Endothelial cell of umbilical vein (primary cell): ENCODE measurements at regions of chr3 and their contacts with region 1.

Region 1: DNA sequence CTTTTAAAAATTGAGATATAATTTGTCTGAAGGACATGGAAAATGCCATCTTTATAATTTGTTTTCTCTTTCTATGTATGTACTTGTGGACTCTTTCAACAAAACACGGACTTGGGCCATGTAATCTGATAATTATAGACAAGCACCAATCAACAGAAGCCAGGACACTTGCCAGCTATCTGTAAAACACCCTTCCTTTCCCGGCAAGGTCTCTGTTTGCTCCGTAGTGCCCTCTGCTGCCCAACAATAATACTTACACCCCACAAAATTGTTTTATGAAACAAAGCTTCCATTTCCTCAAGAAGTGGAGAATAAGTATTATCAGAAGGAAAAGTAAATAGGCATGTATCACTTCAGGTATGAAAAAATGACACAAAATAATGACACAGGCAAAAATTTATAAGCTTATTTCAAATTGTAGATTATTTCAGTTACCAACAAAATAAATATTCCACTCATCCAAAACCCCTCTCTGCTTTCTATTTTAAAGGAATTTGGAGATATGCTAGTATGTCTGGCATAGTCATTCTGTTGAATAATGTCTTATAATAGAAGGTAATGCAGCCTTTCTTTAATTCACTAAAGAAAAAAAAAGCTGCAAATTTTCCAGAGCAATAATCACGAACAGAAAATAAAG is 32.8 kb downstream of the MYH15 start:
- DNase-seq: peak; percentile 77
- H3K4me3 ChIP-seq: no peak overlapping the region
- H3K27ac ChIP-seq: no peak overlapping the region
- H3K4me1 ChIP-seq: peaks cover 2% of the 10 kb centered on the region
- H3K27me3 ChIP-seq: no peaks in the 10 kb centered on the region
- CTCF ChIP-seq: peak; percentile 55 to 57
- POLR2A ChIP-seq: no peak

Region 2: DNA sequence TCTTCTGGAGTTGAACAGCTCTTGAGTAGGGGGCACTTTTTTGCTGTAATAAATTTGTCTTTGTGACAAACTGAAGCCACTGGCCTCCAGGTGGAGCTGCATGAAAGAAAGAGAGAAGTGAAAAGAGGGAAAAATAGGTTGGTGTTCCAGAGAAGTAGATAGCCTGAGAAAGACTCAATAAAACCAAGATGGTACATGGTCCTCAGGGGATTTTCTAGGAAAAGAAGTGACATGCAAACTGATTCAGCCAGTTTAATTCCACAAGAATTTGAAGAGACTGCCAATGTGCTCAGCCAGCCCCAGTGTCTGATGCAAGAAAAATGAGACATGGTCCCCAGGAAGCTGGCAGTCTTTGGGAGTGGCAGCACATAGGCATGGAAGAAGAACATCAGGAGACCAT is 539.5 kb before region 1 on chr3:
- CTCF ChIA-PET with region 1: interaction called, 55 read pairs
- POLR2A ChIA-PET with region 1: no interaction called
- dilution Hi-C with region 1: no loop called
- intact Hi-C with region 1: loop called (anchors 1 kb)
- DNase-seq: peak; percentile 70
- H3K4me3 ChIP-seq: no peak overlapping the region
- H3K27ac ChIP-seq: no peak overlapping the region
- H3K4me1 ChIP-seq: peaks cover 13% of the 10 kb centered on the region
- H3K27me3 ChIP-seq: no peaks in the 10 kb centered on the region
- CTCF ChIP-seq: peak; percentile 28 to 55
- POLR2A ChIP-seq: no peak

Region 3: GRCh38 chr3:108153451-108153981 is 324.1 kb before region 1 on chr3:
- CTCF ChIA-PET with region 1: interaction called, 39 read pairs
- POLR2A ChIA-PET with region 1: no interaction called
- dilution Hi-C with region 1: no loop called
- intact Hi-C with region 1: loop called (anchors 1 kb)
- DNase-seq: peak; percentile 43
- H3K4me3 ChIP-seq: no peak overlapping the region
- H3K27ac ChIP-seq: no peak overlapping the region
- H3K4me1 ChIP-seq: peaks cover 10% of the 10 kb centered on the region
- H3K27me3 ChIP-seq: no peaks in the 10 kb centered on the region
- CTCF ChIP-seq: peak; percentile 18 to 30
- POLR2A ChIP-seq: no peak

Region 4: DNA sequence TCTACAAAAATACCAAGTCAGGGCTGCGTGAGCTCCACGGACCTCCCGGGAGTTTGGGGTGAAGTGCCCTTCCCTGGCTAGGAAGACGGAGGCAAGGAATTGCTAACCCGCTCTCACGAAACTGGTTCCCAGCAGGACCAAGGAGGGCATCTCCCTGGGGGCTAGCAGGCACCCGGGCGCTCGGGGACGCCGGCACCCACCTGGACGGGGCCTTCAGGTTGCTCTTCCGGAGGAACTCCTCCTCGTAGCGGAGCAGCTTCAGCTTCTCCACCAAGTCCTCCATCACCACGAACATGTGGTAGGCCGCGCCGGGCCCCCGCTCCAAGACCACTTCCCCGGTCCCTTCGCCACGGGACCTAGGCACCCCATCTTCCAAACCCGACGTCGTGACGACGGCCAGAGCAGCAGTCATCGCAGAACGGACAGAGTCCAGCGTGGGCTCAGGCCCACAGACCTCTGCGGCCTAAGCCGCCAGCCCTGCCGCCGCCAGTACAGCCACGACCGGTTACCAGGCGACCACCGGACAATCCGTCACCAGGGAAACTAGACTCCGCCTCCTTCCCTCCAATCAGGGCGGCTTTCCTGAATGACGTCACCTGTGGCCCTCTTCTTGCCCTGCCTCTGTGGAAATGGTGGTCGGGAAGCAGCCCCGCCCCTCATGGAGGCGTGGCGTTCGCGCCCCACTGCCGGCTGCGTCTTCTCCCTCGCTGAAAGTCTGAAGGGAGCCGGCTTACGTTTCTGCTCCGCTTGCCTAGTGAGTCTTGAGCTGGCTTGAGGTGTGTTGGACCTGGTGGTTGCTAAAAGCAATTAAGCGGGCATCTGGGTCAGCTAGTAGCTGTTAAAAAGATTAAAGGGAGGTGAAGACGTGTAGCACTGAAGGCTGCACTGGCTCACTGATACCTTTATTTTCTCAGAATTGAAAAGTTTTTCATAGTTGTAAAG is 255.4 kb before region 1 on chr3 and contains the start of gene IFT57:
- CTCF ChIA-PET with region 1: interaction called, 16 read pairs
- POLR2A ChIA-PET with region 1: no interaction called
- dilution Hi-C with region 1: no loop called
- intact Hi-C with region 1: loop called (anchors 2 kb)
- DNase-seq: peak; percentile 99
- H3K4me3 ChIP-seq: peak within 1 kb of the TSS; percentile 66 to 87 (median 82)
- H3K27ac ChIP-seq: peak within 1 kb of the TSS; percentile 68
- H3K4me1 ChIP-seq: peaks cover 21% of the 10 kb centered on the region
- H3K27me3 ChIP-seq: no peaks in the 10 kb centered on the region
- CTCF ChIP-seq: no peak
- POLR2A ChIP-seq: peak; percentile 36
- total RNA-seq, gene IFT57: 23.4 and 25.1 TPM in 2 replicates

Region 5: GRCh38 chr3:108406661-108407206 is 70.9 kb before region 1 on chr3:
- CTCF ChIA-PET with region 1: interaction called, 15 read pairs
- POLR2A ChIA-PET with region 1: no interaction called
- dilution Hi-C with region 1: no loop called
- intact Hi-C with region 1: no loop called
- DNase-seq: peak; percentile 60
- H3K4me3 ChIP-seq: no peak overlapping the region
- H3K27ac ChIP-seq: no peak overlapping the region
- H3K4me1 ChIP-seq: no peaks in the 10 kb centered on the region
- H3K27me3 ChIP-seq: no peaks in the 10 kb centered on the region
- CTCF ChIP-seq: peak; percentile 48 to 52
- POLR2A ChIP-seq: no peak

Region 6: DNA sequence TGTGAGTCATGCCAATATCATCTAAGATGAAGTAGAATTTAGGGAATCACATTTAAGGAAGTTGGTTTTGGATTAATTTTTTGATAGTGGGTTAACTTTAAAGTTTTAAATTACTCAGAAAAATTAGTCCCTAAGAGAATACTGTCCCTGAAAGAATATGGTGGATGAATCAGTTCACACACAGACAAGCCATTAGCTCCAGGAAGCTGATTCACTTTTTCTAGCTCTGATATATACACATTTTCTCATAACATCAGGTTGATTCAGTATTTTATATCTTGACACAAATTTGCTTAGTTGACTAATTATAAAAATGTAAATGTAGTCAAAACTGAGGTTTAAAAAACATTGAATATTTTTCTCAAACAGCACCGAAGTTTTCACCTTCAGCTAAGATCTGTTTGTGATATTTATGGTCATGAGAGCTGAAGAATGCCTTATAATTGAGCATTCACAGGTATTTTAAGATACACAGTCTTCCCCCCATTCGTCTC is 22.4 kb before region 1 on chr3:
- CTCF ChIA-PET with region 1: interaction called, 10 read pairs
- POLR2A ChIA-PET with region 1: no interaction called
- dilution Hi-C with region 1: no loop called
- intact Hi-C with region 1: no loop called
- DNase-seq: peak; percentile 36
- H3K4me3 ChIP-seq: no peak overlapping the region
- H3K27ac ChIP-seq: no peak overlapping the region
- H3K4me1 ChIP-seq: peaks cover 4% of the 10 kb centered on the region
- H3K27me3 ChIP-seq: no peaks in the 10 kb centered on the region
- CTCF ChIP-seq: no peak
- POLR2A ChIP-seq: no peak

Region 7: DNA sequence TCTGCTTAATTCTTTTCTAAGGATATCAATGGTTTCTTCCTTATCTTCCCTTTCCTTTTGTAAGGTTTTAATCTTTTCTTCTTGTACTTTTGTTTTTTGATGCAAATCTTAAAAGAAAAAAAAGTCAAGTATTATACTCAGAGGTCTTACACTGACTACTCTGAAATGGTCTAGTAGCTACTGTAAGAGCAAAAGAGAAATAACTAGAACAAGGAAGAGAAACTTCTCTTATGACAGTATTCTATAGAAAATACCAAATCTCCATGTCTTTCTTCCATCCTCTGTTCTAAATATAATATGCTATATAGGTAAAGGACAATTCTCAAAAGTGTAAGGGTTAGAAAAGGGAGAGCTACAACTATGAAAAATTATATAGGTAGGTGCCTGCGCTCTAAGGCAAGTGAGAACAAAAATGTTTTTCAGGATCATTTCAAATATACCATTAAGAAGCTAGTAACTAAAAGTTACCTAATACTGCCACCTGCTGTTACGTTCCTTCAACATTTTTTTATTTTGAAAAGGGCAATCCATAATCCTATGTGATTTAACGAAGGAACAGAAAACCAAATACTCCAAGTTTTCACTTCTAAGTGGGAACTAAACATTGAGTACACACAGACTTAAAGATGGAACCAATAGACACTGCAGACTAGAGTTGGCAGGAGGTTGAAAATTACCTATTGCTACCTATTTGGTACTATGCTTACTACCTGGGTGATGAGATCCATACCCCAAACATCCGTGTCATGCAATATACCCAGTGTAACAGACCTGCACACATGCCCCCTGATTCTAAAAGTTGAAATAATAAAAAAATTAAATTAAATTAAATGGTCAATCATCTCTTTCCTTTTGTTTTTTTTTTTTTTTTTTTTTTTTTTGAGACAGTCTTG is 74.9 kb after region 1 on chr3:
- CTCF ChIA-PET with region 1: interaction called, 25 read pairs
- POLR2A ChIA-PET with region 1: no interaction called
- dilution Hi-C with region 1: no loop called
- intact Hi-C with region 1: no loop called
- DNase-seq: peak; percentile 68
- H3K4me3 ChIP-seq: no peak overlapping the region
- H3K27ac ChIP-seq: no peak overlapping the region
- H3K4me1 ChIP-seq: peaks cover 12% of the 10 kb centered on the region
- H3K27me3 ChIP-seq: no peaks in the 10 kb centered on the region
- CTCF ChIP-seq: peak; percentile 21 to 31
- POLR2A ChIP-seq: no peak